CD14-positive monocyte (primary cell): ENCODE measurements at regions of chr6 and their contacts with region 1.

Region 1: GRCh38 chr6:37222125-37222967 is 35.2 kb upstream of the TBC1D22B start:
- DNase-seq: peak; percentile 32 to 38 (median 36)
- H3K4me3 ChIP-seq: peak overlapping the region; percentile 48 to 84 (median 67)
- H3K4me3 Mint-ChIP-seq: peak overlapping the region; percentile 83 to 92
- H3K27ac ChIP-seq: peak overlapping the region in 1 of 2 donors; percentile 7
- H3K27ac Mint-ChIP-seq: peak overlapping the region in 6 of 7 donors; percentile 63 to 87 (median 68)
- H3K4me1 ChIP-seq: peaks cover 43 to 51% of the 10 kb centered on the region in 2 donors
- H3K4me1 Mint-ChIP-seq: peaks cover 48% of the 10 kb centered on the region
- H3K27me3 ChIP-seq: no peaks in the 10 kb centered on the region
- H3K27me3 Mint-ChIP-seq: peaks cover 0 to 4% (median 1%) of the 10 kb centered on the region in 3 donors
- CTCF ChIP-seq: no peak

Region 2: DNA sequence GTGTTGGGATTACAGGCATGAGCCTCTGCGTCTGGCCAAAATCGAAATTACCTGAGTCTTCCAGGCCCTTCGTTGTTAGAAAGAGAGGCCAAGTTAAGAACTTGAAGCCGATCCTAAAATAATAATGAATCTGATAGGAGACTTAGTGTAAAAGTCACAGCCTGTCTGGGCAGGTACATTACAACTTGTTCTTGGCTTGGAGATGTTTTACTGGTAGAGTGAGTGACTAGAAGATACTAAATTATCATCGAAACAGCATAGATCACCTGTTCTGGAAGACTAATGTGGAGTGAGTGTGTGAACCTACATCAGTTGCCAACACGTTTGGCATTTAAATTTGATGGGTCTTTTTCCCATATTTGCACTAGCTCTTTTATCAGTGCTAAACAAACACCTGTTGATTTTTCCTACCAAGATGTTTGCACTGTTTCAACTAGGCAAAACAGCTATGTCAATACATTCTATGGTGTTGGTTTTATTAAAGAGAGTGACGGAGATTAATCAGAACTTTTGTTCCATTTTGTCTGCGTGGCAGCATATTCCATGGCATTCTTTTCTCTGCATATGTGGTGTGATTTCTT is 40.2 kb after region 1 on chr6:
- intact Hi-C with region 1: loop called in 1 of 2 experiments (anchors 5 kb)
- DNase-seq: no peak
- H3K4me3 ChIP-seq: no peak overlapping the region
- H3K4me3 Mint-ChIP-seq: no peak overlapping the region
- H3K27ac ChIP-seq: no peak overlapping the region
- H3K27ac Mint-ChIP-seq: no peak overlapping the region
- H3K4me1 ChIP-seq: peaks cover 20 to 23% of the 10 kb centered on the region in 2 donors
- H3K4me1 Mint-ChIP-seq: peaks cover 46% of the 10 kb centered on the region
- H3K27me3 ChIP-seq: no peaks in the 10 kb centered on the region
- H3K27me3 Mint-ChIP-seq: peaks cover 0 to 1% (median 0%) of the 10 kb centered on the region in 3 donors
- CTCF ChIP-seq: no peak